B cell (primary cell): ENCODE measurements at regions of chr14 and their contacts with region 1.

Region 1: DNA sequence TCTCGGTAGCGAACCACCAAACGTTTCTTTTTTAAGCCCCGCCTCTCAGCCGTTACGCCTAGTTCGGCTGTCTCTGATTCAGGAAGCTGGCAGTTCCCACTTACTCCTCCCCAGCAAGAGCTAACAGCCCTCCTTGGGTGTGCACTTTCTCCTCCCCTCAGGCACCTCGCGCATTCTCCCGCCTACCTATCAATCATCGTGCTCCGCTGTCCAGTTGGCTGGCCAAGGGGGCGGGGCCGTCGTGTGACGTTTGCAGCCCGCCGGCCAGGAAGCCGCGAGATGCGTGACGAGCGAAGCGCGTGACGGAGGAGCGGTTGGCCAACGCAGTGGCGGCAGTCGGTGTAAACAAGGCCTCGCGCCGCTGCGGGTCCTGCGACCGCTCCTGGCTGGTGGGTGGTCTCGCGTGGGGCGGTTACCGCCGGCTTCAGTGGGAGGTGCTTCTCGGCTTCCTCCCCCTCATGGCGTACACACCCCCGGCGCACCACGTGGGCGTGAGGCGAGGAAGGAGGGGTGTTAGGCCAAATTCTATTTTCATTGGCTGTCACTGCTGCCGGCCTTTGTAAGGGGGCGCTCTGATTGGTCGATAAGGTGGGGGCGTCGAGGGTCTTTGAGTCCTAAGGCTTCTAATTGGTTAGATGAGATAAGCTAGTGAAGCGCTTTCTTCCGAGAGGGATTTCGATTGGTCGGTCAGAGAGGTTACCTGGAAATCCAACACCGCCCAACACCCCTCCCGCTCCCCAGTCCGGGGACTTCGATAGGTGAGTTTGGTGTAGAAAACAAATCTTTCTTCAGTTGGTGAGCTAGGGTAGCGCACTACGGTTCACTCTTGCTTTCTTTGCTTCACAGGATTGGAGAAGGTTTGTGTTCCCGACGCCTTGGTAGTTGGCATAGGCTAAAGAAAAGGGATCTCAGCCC is at the starts of genes DCAF11 and NRL:
- DNase-seq: peak; percentile 100
- ATAC-seq: peak; percentile 81
- H3K4me3 ChIP-seq: peak within 1 kb of the TSS; percentile 88 to 99 (median 97)
- H3K4me3 Mint-ChIP-seq: peak within 1 kb of the TSS; percentile 93
- H3K27ac ChIP-seq: peak within 1 kb of the TSS; percentile 99 to 100
- H3K27ac Mint-ChIP-seq: peak within 1 kb of the TSS; percentile 100
- H3K4me1 ChIP-seq: peaks cover 17 to 25% of the 10 kb centered on the region in 2 donors
- H3K4me1 Mint-ChIP-seq: peaks cover 26% of the 10 kb centered on the region
- H3K27me3 ChIP-seq: no peaks in the 10 kb centered on the region
- H3K27me3 Mint-ChIP-seq: no peaks in the 10 kb centered on the region
- CTCF ChIP-seq: no peak
- total RNA-seq, gene DCAF11: 84.8 and 96.3 TPM in 2 replicates
- total RNA-seq, gene NRL: 8.1 and 8.8 TPM in 2 replicates

Region 2: GRCh38 chr14:24032721-24033418 is 81.9 kb before region 1 on chr14:
- CTCF ChIA-PET with region 1: no interaction called
- POLR2A ChIA-PET with region 1: no interaction called
- intact Hi-C with region 1: no loop called
- DNase-seq: no peak
- ATAC-seq: no peak
- H3K4me3 ChIP-seq: no peak overlapping the region
- H3K4me3 Mint-ChIP-seq: no peak overlapping the region
- H3K27ac ChIP-seq: no peak overlapping the region
- H3K27ac Mint-ChIP-seq: no peak overlapping the region
- H3K4me1 ChIP-seq: peaks cover 0 to 9% of the 10 kb centered on the region in 2 donors
- H3K4me1 Mint-ChIP-seq: peaks cover 10% of the 10 kb centered on the region
- H3K27me3 ChIP-seq: no peaks in the 10 kb centered on the region
- H3K27me3 Mint-ChIP-seq: no peaks in the 10 kb centered on the region
- CTCF ChIP-seq: no peak

Region 3: GRCh38 chr14:24080888-24081738 is 33.7 kb before region 1 on chr14:
- CTCF ChIA-PET with region 1: interaction called, 75 read pairs
- POLR2A ChIA-PET with region 1: interaction called, 15 read pairs
- intact Hi-C with region 1: loop called (anchors 1 kb)
- DNase-seq: peak; percentile 82
- ATAC-seq: peak; percentile 93
- H3K4me3 ChIP-seq: peak overlapping the region; percentile 48 to 78 (median 64)
- H3K4me3 Mint-ChIP-seq: peak overlapping the region; percentile 86
- H3K27ac ChIP-seq: peak overlapping the region; percentile 75 to 77
- H3K27ac Mint-ChIP-seq: peak overlapping the region; percentile 91
- H3K4me1 ChIP-seq: peaks cover 19 to 24% of the 10 kb centered on the region in 2 donors
- H3K4me1 Mint-ChIP-seq: peaks cover 30% of the 10 kb centered on the region
- H3K27me3 ChIP-seq: no peaks in the 10 kb centered on the region
- H3K27me3 Mint-ChIP-seq: no peaks in the 10 kb centered on the region
- CTCF ChIP-seq: no peak

Region 4: DNA sequence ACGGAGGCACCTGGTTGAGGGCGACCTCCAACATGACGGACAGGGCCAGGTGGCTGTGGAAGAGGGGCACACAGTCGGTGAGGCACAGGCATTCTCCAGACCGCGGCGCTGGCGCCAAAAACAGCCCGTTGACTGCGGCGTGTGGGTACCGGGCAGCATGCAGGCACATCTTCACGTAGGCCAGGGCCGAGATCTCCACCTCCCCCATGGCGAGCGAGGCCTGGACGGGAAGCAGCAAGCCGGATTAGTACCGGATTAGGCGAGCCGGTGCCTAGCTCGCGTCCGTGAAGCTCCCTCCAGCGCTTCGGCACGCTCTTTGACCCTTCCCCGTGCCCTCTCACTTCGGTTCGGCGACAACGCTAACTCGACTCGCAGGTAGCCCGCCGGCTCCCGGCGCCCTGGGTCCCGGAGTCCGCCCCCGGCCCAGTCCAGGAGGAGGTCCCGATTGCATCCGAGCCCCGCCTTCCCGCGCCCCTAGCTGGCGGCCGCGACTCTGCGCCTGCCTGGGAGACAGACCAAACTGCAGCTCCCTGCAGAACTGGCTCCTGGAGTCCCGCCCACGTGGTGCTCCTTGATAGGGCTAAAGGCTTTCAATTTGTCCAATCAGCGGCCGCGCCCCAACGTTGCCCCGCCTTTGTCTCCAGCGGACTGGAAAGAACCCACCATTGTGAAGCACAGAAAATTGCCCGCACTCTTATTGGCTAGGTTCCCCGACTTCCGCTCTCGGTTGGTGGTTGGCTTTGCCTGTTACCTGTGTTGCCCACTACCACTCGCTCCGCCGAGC is 26.5 kb after region 1 on chr14 and contains the start of gene EMC9:
- CTCF ChIA-PET with region 1: interaction called, 29 read pairs
- POLR2A ChIA-PET with region 1: interaction called, 49 read pairs
- intact Hi-C with region 1: loop called (anchors 1 kb)
- DNase-seq: peak; percentile 99
- ATAC-seq: peak; percentile 89
- H3K4me3 ChIP-seq: peak within 1 kb of the TSS; percentile 67 to 93 (median 82)
- H3K4me3 Mint-ChIP-seq: peak within 1 kb of the TSS; percentile 96
- H3K27ac ChIP-seq: peak within 1 kb of the TSS; percentile 63 to 80
- H3K27ac Mint-ChIP-seq: peak within 1 kb of the TSS; percentile 95
- H3K4me1 ChIP-seq: peaks cover 33 to 50% of the 10 kb centered on the region in 2 donors
- H3K4me1 Mint-ChIP-seq: peaks cover 64% of the 10 kb centered on the region
- H3K27me3 ChIP-seq: no peaks in the 10 kb centered on the region
- H3K27me3 Mint-ChIP-seq: no peaks in the 10 kb centered on the region
- CTCF ChIP-seq: peak; percentile 37
- total RNA-seq, gene EMC9: 24.7 and 26.4 TPM in 2 replicates

Region 5: GRCh38 chr14:24188251-24189058 is 73.7 kb after region 1 on chr14 and contains the start of gene IPO4:
- CTCF ChIA-PET with region 1: interaction called, 3 read pairs
- POLR2A ChIA-PET with region 1: interaction called, 4 read pairs
- intact Hi-C with region 1: loop called (anchors 1 kb)
- DNase-seq: peak; percentile 96
- ATAC-seq: peak; percentile 93
- H3K4me3 ChIP-seq: peak within 1 kb of the TSS; percentile 32 to 79 (median 70)
- H3K4me3 Mint-ChIP-seq: peak within 1 kb of the TSS; percentile 93
- H3K27ac ChIP-seq: peak within 1 kb of the TSS; percentile 63 to 86
- H3K27ac Mint-ChIP-seq: peak within 1 kb of the TSS; percentile 87
- H3K4me1 ChIP-seq: peaks cover 14 to 17% of the 10 kb centered on the region in 2 donors
- H3K4me1 Mint-ChIP-seq: peaks cover 35% of the 10 kb centered on the region
- H3K27me3 ChIP-seq: no peaks in the 10 kb centered on the region
- H3K27me3 Mint-ChIP-seq: no peaks in the 10 kb centered on the region
- CTCF ChIP-seq: no peak
- total RNA-seq, gene IPO4: 29.8 and 35.0 TPM in 2 replicates

Region 6: GRCh38 chr14:24241829-24242443 is 127.1 kb after region 1 on chr14:
- CTCF ChIA-PET with region 1: interaction called, 12 read pairs
- POLR2A ChIA-PET with region 1: interaction called, 10 read pairs
- intact Hi-C with region 1: loop called (anchors 1 kb)
- DNase-seq: no peak
- ATAC-seq: peak; percentile 83
- H3K4me3 ChIP-seq: peak overlapping the region; percentile 71 to 91 (median 88)
- H3K4me3 Mint-ChIP-seq: peak overlapping the region; percentile 98
- H3K27ac ChIP-seq: peak overlapping the region; percentile 98 to 100
- H3K27ac Mint-ChIP-seq: peak overlapping the region; percentile 100
- H3K4me1 ChIP-seq: peaks cover 47 to 49% of the 10 kb centered on the region in 2 donors
- H3K4me1 Mint-ChIP-seq: peaks cover 64% of the 10 kb centered on the region
- H3K27me3 ChIP-seq: no peaks in the 10 kb centered on the region
- H3K27me3 Mint-ChIP-seq: no peaks in the 10 kb centered on the region
- CTCF ChIP-seq: peak; percentile 23